ENCODE measurements at regions of chr13 and their contacts with region 1.

Region 1: DNA sequence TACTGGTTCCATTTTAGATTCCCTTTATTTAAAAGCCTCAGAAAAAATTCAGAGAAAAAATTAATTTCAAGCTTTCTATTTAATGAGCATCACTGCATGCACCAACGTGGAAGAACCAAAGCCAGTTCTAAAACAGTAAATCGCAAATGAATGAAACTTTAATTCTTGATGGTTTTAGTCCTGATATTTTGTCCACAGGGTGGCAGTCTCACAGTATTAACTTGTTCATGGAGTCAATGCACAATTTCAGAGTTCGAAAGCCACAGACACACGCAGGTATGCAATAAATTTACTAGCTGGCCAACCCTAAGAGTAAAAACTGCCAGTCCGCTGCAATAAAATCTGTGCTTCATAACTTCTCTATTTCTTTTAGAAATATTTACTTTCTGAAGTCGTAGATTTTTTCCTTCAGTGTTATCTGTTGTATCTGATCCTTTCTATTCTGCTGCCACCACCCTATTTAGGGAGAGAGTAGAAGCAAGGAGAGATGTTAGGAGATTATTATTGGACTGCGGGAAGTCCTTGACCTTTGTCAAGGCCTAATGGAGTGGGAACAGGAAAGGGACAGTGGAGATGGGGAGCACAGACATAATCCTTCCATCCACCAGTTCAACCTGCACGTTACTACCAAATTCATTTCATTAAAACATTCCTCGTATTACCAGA is 7.0 kb upstream of the WBP4 start:
- DNase-seq: no peak
- ATAC-seq: peak in 4 of 8 donors; percentile 30 to 52 (median 38)
- H3K4me3 ChIP-seq: no peak overlapping the region
- H3K27ac ChIP-seq: peak overlapping the region in 9 of 10 donors; percentile 9 to 81 (median 70)
- H3K4me1 ChIP-seq: peaks cover 3 to 99% (median 94%) of the 10 kb centered on the region in 9 donors
- H3K27me3 ChIP-seq: no peaks in the 10 kb centered on the region
- CTCF ChIP-seq: peak; percentile 27 to 68 (median 54)

Region 2: DNA sequence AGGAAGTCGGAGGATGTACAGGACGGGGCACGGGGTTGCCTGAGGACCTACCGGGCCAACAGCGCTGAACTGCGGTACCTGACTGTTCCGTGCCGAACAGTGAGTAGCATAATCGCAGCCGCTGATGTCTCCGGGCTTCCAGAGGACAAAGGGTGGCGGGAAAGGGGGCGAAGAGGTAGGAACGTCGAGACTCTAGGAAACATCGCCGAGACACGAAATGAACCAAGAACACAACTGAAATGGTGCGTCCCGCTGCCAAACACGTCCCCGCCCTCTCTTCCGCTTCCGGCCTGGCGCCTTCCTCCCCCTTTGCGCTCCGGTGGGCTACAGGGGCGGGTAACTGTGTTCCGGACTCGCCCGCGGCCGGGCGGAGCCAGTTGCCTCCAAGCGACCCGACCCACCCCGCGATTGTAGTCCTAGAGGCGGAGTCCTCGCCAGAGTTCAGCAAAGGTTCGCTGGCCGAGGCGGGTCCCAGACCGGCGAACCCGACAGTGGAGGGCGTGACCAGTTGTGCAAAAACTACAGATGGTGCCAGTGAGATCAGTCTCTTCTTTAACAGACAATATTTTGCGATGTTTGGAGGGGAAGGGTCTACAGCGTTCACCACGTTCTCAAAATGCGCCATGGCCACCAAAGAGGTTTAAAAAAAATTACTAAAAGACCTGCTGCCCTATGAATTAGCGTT is 283.3 kb before region 1 on chr13 and contains the start of gene MRPS31:
- intact Hi-C with region 1: loop called in 1 of 10 experiments (anchors 10 kb)
- DNase-seq: peak; percentile 95 to 97
- ATAC-seq: peak; percentile 99 to 100 (median 100)
- H3K4me3 ChIP-seq: peak within 1 kb of the TSS; percentile 53 to 94 (median 74)
- H3K27ac ChIP-seq: peak within 1 kb of the TSS; percentile 73 to 94 (median 88)
- H3K4me1 ChIP-seq: peaks cover 0 to 26% (median 11%) of the 10 kb centered on the region in 9 donors
- H3K27me3 ChIP-seq: no peaks in the 10 kb centered on the region
- CTCF ChIP-seq: peak in 3 of 9 donors; percentile 6 to 23 (median 14)
- total RNA-seq, gene MRPS31: 22.2 to 32.9 (median 30.4) TPM

Region 3: GRCh38 chr13:40789275-40790133 is 264.8 kb before region 1 on chr13 and contains the start of gene SLC25A15:
- intact Hi-C with region 1: loop called in 1 of 10 experiments (anchors 5 kb)
- DNase-seq: peak; percentile 77 to 84
- ATAC-seq: peak; percentile 89 to 96 (median 94)
- H3K4me3 ChIP-seq: peak within 1 kb of the TSS; percentile 42 to 85 (median 70)
- H3K27ac ChIP-seq: peak within 1 kb of the TSS; percentile 1 to 92 (median 84)
- H3K4me1 ChIP-seq: peaks cover 0 to 19% (median 10%) of the 10 kb centered on the region in 9 donors
- H3K27me3 ChIP-seq: no peaks in the 10 kb centered on the region
- CTCF ChIP-seq: peak in 5 of 9 donors; percentile 38 to 55 (median 53)
- total RNA-seq, gene SLC25A15: 3.3 to 6.0 (median 4.9) TPM

Region 4: DNA sequence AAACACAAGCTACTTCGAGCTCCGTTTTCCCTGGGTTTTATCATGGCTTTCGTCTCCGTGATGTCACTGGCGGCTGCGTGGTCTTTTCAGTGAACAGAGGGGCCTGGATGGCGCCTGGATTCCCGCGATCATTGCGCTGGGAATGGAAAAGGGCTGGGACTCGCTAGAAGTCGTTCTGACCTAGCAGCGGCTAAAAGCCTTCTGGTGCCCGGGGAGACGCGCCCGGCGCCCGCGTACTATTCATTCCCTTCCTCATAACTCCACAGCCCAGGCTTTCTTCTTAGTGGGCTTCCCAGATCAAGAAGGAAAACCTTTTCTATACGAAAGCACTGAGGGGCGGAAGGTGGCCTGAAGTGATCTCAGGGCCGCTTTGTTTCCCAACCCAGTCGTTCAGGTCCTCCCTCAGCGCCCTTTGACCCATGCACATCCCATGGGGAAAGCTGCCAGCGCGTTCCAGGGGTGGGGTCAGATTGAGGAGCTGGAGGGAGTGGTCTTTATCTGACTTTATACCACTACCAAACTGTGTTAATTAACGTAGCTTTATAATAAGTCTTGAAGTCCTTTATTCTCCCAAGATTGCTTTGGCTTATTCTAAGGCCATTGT is 131.8 kb before region 1 on chr13:
- intact Hi-C with region 1: loop called in 2 of 10 experiments (anchors 5 to 10 kb)
- DNase-seq: peak; percentile 13 to 18
- ATAC-seq: no peak
- H3K4me3 ChIP-seq: peak overlapping the region in 3 of 10 donors; percentile 65 to 77 (median 72)
- H3K27ac ChIP-seq: peak overlapping the region in 4 of 10 donors; percentile 45 to 89 (median 72)
- H3K4me1 ChIP-seq: peaks cover 0 to 17% (median 11%) of the 10 kb centered on the region in 9 donors
- H3K27me3 ChIP-seq: no peaks in the 10 kb centered on the region
- CTCF ChIP-seq: no peak

Region 5: GRCh38 chr13:40982772-40983171 is 71.6 kb before region 1 on chr13:
- intact Hi-C with region 1: loop called in 5 of 10 experiments (anchors 5 to 10 kb)
- DNase-seq: peak in 1 of 2 donors; percentile 76
- ATAC-seq: peak; percentile 63 to 87 (median 83)
- H3K4me3 ChIP-seq: peak overlapping the region; percentile 20 to 54 (median 42)
- H3K27ac ChIP-seq: peak overlapping the region; percentile 31 to 91 (median 84)
- H3K4me1 ChIP-seq: peaks cover 7 to 89% (median 75%) of the 10 kb centered on the region in 9 donors
- H3K27me3 ChIP-seq: no peaks in the 10 kb centered on the region
- CTCF ChIP-seq: no peak

Region 6: GRCh38 chr13:40992678-40993518 is 61.4 kb before region 1 on chr13:
- intact Hi-C with region 1: loop called in 6 of 10 experiments (anchors 5 to 10 kb)
- DNase-seq: no peak
- ATAC-seq: peak; percentile 18 to 53 (median 37)
- H3K4me3 ChIP-seq: no peak overlapping the region
- H3K27ac ChIP-seq: peak overlapping the region in 2 of 10 donors; percentile 4 to 11
- H3K4me1 ChIP-seq: peaks cover 0 to 78% (median 43%) of the 10 kb centered on the region in 9 donors
- H3K27me3 ChIP-seq: no peaks in the 10 kb centered on the region
- CTCF ChIP-seq: peak in 4 of 9 donors; percentile 11 to 44 (median 24)

Region 7: DNA sequence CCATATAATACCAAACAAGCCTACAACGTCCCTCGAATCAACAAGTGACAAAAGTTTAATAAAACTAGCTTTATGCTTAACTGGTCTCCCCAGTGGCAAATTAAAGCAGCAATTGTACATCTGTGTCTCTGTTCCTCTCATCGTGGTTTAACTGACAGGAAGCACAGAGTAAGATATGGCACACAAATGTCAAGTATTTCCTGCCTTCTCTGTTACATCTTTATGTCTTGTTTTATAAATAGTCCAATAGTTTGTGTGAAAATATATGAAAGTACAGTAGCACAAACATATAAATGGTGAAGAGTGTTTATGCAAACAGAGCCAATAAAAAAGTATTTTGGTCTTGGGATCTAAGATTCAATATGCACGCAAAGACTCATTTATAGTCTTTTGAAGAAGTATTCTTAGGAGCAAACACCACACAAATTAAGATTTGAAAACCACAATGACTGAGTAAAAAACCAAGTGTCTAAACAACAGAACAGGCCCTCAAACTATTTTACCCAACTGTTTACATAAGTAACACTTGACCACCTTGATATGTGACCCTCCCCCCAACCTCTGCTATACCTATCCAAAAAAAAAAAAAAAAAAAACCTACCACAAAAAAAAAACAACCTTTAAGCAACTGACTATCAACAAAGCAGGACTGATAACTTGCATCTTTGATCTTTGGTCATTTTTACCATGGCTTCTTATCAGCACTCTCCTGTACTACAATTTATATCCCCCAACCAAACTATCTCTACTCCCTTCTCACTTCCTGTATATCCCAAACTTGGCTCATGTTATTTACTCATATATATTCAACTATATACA is 49.3 kb before region 1 on chr13:
- intact Hi-C with region 1: no loop called
- DNase-seq: no peak
- ATAC-seq: peak in 1 of 8 donors; percentile 37
- H3K4me3 ChIP-seq: no peak overlapping the region
- H3K27ac ChIP-seq: peak overlapping the region in 4 of 10 donors; percentile 0 to 72 (median 25)
- H3K4me1 ChIP-seq: peaks cover 0 to 95% (median 41%) of the 10 kb centered on the region in 9 donors
- H3K27me3 ChIP-seq: no peaks in the 10 kb centered on the region
- CTCF ChIP-seq: no peak

Measured in heart right ventricle (tissue), 16 donors.